ENCODE measurements at regions of chr3 and their contacts with region 1.

Region 1: DNA sequence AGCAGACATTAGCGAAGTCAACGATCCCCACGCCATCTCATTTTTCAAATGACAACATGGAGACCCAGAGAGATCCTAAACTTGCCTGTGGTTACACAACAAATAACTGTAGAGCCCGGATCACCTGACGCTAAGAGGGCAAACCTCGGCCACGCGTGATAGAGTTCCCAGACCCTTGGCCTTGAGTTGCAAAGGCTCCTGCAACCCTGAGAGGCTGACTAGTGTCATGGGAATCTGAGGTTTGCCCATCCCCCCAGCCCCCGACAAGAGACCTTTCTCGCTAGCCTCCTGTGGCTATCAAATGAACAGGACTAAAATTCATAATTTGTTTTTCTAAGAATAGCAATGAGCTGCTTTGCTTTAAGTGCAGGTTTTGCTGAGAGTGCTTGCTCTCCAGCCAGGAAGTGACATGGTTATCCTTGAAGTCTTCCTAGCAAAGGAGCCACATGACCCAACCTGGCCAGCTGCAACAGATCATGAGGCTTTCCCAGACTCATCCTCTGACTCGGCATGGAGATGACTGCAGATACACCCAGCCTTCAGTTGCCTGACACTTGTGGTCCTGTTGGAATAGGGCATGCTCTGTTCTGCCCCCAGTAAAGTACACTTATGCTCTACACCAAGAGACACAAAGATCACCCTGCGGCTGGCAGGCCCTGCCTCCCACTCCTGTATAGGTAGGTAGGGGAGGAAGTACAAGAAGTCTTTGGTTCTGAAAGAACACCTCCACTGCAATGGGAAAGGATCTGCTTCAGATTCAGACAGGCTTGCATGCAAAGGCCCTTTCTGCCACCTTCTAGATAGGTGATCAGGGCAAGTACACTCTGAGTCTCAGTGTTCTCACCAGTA is 36.0 kb downstream of the MCF2L2 start:
- DNase-seq: no peak
- H3K4me3 ChIP-seq: no peak overlapping the region
- H3K27ac ChIP-seq: no peak overlapping the region
- H3K4me1 ChIP-seq: no peaks in the 10 kb centered on the region
- H3K27me3 ChIP-seq: no peaks in the 10 kb centered on the region
- CTCF ChIP-seq: no peak

Region 2: DNA sequence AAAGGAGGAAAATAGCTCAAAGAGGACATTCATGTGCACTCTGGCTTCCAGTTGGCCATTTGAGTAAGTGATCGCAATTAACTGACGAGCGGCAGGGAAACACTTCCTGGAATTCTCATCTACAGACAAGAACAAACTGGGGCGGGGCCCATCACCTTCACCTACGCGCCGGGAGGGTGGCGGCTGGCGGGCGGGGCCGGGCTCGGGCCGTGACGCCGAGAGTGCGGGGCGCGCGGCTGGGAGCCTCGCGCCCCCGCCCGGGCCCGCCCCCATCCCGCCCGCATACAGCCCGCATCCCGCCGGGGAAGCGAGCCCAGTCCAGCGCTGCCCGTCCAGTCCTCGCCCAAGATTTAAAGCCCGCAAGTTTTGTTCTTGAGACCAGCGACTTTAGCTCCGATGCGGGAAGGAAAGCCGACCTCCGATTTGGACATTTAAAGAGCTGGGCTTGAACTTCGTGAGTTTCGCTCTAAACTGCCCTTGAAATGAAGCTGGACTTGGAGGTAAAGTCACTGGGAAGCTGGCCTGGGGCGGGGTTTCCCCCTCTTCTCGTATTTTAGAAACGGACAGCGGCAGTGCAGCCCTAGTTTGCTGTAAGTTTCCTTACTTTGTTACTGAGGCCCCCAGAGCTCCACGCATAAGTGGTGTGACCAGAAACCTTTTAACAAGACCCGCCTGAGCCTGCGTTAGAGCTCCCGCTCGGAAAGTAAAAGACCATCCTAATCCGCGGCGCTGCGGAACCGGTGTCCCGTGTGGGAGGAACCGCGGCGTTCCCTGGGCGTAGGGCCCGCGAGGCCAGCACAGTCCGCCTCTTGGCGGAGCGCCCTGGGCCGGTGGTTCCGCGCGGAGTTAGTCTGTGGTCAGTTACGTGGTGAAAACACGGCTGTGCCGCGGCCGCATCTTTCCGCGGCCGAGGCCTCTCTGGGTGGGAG is 139.2 kb before region 1 on chr3 and contains the start of gene B3GNT5:
- CTCF ChIA-PET with region 1: no interaction called
- POLR2A ChIA-PET with region 1: interaction called, 12 read pairs
- intact Hi-C with region 1: no loop called
- DNase-seq: peak; percentile 48
- H3K4me3 ChIP-seq: peak within 1 kb of the TSS; percentile 91
- H3K27ac ChIP-seq: peak within 1 kb of the TSS; percentile 85
- H3K4me1 ChIP-seq: peaks cover 11% of the 10 kb centered on the region
- H3K27me3 ChIP-seq: no peaks in the 10 kb centered on the region
- CTCF ChIP-seq: no peak
- total RNA-seq, gene B3GNT5: 25.3 and 26.5 TPM in 2 replicates

Measured in A673 (cell line).